ENCODE measurements at regions of chr5 and their contacts with region 1.

Region 1: GRCh38 chr5:56838409-56839039 is 23.2 kb downstream of the MAP3K1 start:
- DNase-seq: peak; percentile 63
- H3K4me3 Mint-ChIP-seq: peak overlapping the region; percentile 41
- H3K27ac Mint-ChIP-seq: peak overlapping the region; percentile 73
- H3K4me1 Mint-ChIP-seq: peaks cover 32% of the 10 kb centered on the region
- H3K27me3 Mint-ChIP-seq: no peaks in the 10 kb centered on the region
- CTCF ChIP-seq: peak; percentile 74

Region 2: DNA sequence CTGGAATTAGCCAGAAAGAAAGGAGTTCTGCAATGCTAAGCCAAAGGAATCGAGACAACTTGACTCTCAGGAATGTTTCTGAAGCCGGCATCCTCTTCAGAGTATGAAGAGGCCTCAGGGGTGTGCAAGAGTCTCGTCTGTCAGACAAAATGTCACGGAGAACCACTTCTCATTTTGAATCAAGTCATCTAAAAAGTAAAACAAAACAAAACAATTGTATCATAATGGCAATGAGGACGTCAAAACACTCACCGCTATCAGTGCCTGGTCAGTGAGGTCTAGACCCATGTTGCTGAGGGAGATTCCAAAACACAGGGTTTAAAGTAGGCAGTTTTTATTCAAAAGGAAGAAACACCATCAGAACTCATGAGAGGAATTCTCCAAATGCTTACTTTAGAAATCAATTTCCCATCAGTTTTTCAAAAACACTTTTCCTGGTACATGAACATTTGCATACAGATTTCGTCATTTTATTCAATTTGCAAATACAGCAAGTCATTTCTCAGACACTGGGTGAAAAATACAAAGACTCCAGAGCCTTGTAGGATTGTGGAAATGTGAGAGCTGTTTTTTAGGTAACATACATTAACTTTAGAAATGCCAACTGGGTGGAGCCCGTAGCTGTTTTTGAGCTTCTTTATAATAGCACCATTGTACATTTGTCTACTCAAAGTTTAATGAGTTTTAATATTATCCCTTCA is 112.7 kb before region 1 on chr5:
- CTCF ChIA-PET with region 1: no interaction called
- POLR2A ChIA-PET with region 1: no interaction called
- intact Hi-C with region 1: no loop called
- DNase-seq: peak; percentile 11
- H3K4me3 Mint-ChIP-seq: no peak overlapping the region
- H3K27ac Mint-ChIP-seq: no peak overlapping the region
- H3K4me1 Mint-ChIP-seq: no peaks in the 10 kb centered on the region
- H3K27me3 Mint-ChIP-seq: no peaks in the 10 kb centered on the region
- CTCF ChIP-seq: no peak

Region 3: DNA sequence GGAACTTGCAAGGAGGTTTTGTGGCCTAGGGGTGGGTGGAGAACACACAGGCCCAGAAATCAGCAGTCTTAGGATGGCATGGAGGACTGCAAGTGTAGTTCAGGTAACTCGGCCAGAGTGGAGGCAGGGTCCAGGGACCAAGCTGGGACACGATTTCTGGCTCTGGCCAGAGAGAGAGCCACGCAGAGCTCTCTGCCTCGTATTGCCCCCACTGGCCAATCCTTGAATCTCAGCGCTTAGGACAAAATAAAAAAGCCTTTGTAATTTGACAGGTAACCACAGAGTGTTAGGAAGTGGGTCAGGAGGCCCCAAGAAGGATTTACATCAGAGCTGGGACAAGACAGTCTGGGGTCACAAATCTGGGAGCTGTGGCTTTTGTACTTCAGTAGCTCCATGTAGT is 11.5 kb before region 1 on chr5:
- CTCF ChIA-PET with region 1: interaction called, 34 read pairs
- POLR2A ChIA-PET with region 1: interaction called, 8 read pairs
- intact Hi-C with region 1: no loop called
- DNase-seq: no peak
- H3K4me3 Mint-ChIP-seq: no peak overlapping the region
- H3K27ac Mint-ChIP-seq: peak overlapping the region; percentile 44
- H3K4me1 Mint-ChIP-seq: peaks cover 32% of the 10 kb centered on the region
- H3K27me3 Mint-ChIP-seq: no peaks in the 10 kb centered on the region
- CTCF ChIP-seq: peak; percentile 17

Region 4: DNA sequence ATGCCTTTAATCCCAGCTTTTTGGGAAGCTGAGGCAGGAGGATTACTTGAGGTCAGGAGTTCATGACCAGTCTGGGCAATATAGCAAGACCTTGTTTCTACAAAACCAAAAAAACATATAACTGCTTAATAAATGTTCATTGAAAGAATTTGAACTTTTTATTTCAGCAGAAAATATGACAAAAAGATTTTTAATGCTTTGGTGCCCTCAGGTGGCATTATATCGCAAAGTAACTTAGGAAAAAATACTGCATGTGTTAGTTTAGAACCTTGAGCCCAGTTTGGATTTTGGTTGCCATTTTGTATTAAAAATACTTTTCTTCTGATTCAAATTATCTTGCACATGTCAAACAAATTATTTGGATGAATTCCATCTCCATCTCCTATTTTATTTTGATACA is 438.6 kb after region 1 on chr5:
- CTCF ChIA-PET with region 1: no interaction called
- POLR2A ChIA-PET with region 1: no interaction called
- intact Hi-C with region 1: loop called (anchors 5 kb)
- DNase-seq: peak; percentile 35
- H3K4me3 Mint-ChIP-seq: no peak overlapping the region
- H3K27ac Mint-ChIP-seq: no peak overlapping the region
- H3K4me1 Mint-ChIP-seq: no peaks in the 10 kb centered on the region
- H3K27me3 Mint-ChIP-seq: no peaks in the 10 kb centered on the region
- CTCF ChIP-seq: peak; percentile 26